Tibial artery (tissue), 4 donors: ENCODE measurements at regions of chr1 and their contacts with region 1.

Region 1: DNA sequence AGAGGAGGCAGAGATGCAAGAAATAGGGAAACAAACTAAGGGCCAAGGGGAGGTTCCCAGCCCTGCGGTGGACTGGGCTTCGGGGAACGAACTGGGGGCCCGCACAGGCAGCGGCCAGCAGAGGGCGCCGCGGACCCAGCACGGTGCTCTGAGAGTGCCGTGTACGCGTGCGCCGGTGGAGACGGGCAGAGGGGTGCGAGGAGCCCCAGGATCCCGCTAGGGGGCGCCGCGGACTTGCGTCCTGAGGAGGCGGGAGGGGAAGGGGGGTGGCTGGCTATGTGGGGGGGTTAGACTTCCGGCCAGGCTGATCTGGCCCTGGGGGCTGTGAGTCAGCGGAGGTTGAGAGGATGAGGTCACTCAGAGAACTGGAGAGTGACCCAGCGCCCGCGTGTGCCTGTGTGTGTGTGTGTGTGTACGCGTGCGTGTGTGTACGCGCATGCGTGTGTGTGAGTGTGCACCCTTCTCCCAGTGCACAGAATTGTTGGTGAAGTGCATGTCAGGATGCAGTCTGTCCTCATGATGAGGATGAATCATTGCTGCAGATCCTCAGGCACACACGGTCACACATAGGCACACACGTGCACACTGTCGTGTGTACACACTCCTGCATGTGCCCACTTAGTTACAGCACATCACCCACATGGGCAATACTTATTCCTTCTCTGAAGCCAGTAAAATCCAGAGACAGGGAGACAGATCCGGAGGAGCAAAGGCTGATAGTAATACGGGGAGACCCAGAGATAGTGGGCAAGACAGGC is 17.0 kb downstream of the NES start:
- DNase-seq: peak; percentile 94 to 99
- H3K4me3 ChIP-seq: peak overlapping the region in 1 of 2 donors; percentile 14
- H3K27ac ChIP-seq: peak overlapping the region; percentile 73 to 77
- H3K4me1 ChIP-seq: peaks cover 0 to 84% (median 73%) of the 10 kb centered on the region in 4 donors
- H3K27me3 ChIP-seq: peaks cover 0 to 16% of the 10 kb centered on the region in 2 donors
- CTCF ChIP-seq: peak; percentile 99

Region 2: GRCh38 chr1:156385534-156386031 is 274.6 kb before region 1 on chr1:
- intact Hi-C with region 1: loop called (anchors 5 kb)
- DNase-seq: peak in 1 of 2 donors; percentile 57
- H3K4me3 ChIP-seq: no peak overlapping the region
- H3K27ac ChIP-seq: no peak overlapping the region
- H3K4me1 ChIP-seq: peaks cover 0 to 9% (median 0%) of the 10 kb centered on the region in 4 donors
- H3K27me3 ChIP-seq: peaks cover 0 to 52% of the 10 kb centered on the region in 2 donors
- CTCF ChIP-seq: peak; percentile 86 to 93

Region 3: GRCh38 chr1:156583821-156584622 is 76.2 kb before region 1 on chr1:
- intact Hi-C with region 1: loop called (anchors 5 kb)
- DNase-seq: peak; percentile 76 to 79
- H3K4me3 ChIP-seq: no peak overlapping the region
- H3K27ac ChIP-seq: no peak overlapping the region
- H3K4me1 ChIP-seq: no peaks in the 10 kb centered on the region
- H3K27me3 ChIP-seq: peaks cover 0 to 2% of the 10 kb centered on the region in 2 donors
- CTCF ChIP-seq: peak; percentile 86 to 89

Region 4: GRCh38 chr1:156684227-156684782 is 24.1 kb after region 1 on chr1:
- intact Hi-C with region 1: loop called (anchors 2 kb)
- DNase-seq: no peak
- H3K4me3 ChIP-seq: no peak overlapping the region
- H3K27ac ChIP-seq: no peak overlapping the region
- H3K4me1 ChIP-seq: peaks cover 0 to 7% (median 4%) of the 10 kb centered on the region in 4 donors
- H3K27me3 ChIP-seq: peaks cover 0 to 69% of the 10 kb centered on the region in 2 donors
- CTCF ChIP-seq: no peak

Region 5: DNA sequence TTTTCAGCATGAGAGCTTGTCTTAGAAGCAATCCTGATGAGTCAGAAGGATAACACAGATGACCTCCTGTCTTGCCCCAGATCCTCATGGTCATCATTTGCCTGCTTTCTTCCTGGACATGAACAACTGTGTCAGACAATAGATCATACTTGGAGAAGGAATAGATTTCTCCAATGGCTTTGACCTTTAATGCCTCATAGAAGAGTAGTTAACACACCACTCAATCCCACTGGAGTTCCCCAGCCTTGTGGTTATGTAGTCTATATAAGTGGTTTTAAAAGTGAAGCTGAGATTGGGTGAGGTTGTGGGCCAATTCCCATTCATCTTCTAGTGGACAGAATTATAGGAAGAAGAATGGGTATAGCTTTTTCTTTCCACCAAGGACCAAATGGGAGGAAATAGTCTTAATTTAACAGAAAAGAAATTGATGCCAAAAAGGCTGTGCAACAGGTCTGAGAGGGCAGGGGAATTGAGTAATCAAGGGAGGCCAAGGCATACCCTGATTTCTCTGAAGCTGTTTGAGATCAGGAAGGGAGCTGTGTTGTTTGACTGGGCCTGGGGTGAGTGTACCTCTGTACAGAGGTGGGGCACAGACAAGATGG is 121.5 kb after region 1 on chr1:
- intact Hi-C with region 1: no loop called
- DNase-seq: no peak
- H3K4me3 ChIP-seq: no peak overlapping the region
- H3K27ac ChIP-seq: no peak overlapping the region
- H3K4me1 ChIP-seq: peaks cover 0 to 13% (median 7%) of the 10 kb centered on the region in 4 donors
- H3K27me3 ChIP-seq: no peaks in the 10 kb centered on the region
- CTCF ChIP-seq: no peak

Region 6: DNA sequence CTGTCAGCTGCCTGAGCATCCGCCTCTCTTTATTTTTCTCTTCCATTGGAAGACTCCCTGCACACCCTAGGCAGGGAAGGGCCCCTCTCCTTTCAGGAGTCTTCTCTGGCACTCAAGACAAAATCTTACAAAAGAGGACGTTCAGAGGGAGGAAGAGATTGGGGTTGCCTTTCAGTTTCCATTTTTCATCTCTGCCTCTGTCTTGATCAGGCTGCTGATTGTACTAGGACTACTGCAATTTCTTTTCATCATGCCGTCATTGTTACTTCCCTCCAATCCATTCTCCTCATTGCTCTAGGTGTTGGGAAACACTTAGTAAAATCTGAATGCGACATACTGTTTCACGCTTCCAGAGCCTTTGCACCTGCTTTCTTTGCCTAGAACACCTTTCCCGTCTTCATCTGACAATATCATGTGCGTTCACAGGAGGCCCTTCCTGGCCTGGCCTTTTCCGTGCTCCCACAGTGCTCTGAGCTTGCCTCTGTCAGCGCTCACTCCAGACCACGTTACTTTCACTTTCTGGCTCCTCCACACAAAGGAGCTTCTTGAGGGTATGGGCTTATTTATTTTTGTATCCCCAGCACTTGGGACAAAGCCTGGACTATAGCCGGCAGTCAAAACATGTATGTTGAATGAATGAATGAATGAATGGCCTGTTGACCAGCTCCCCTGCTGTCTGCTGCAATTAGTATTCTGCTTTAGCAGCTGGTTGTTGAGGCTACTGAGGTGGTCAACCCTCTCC is 271.2 kb after region 1 on chr1:
- intact Hi-C with region 1: no loop called
- DNase-seq: no peak
- H3K4me3 ChIP-seq: peak overlapping the region in 1 of 2 donors; percentile 4
- H3K27ac ChIP-seq: no peak overlapping the region
- H3K4me1 ChIP-seq: peaks cover 0 to 14% (median 10%) of the 10 kb centered on the region in 4 donors
- H3K27me3 ChIP-seq: peaks cover 0 to 29% of the 10 kb centered on the region in 2 donors
- CTCF ChIP-seq: no peak